CD4-positive, alpha-beta memory T cell (primary cell): ENCODE measurements at regions of chr7 and their contacts with region 1.

Region 1: DNA sequence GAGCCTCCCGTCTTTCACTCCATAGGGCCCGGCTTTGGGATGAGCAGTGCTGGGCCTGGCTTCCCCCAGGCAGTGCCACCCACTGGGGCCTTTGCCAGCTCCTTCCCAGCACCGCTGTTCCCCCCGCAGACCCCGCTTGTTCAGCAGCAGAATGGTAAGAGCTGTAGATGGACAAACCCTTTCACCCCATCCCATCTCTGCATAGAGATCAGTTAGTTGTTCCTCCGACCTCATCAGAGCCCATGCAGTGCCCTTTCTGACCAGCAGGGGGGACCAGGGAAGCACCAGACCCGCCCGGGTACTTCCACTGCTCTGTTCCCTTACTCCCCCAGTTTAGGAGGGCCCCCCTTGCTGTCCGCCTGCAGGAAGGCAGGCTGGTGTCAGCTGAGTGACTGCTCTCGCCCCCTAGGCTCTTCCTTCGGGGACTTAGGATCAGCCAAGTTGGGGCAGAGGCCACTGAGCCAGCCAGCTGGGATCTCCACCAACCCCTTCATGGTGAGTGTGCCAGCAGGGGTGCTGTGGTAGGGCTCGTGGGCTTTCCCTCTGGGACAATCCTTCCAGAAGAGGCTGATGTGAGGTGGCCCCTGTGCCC is 9.8 kb downstream of the SAP25 start:
- DNase-seq: peak; percentile 74 to 80 (median 77)
- H3K4me3 ChIP-seq: no peak overlapping the region
- H3K4me3 Mint-ChIP-seq: no peak overlapping the region
- H3K27ac ChIP-seq: peak overlapping the region; percentile 32
- H3K27ac Mint-ChIP-seq: peak overlapping the region; percentile 39 to 84 (median 59)
- H3K4me1 ChIP-seq: peaks cover 29% of the 10 kb centered on the region
- H3K4me1 Mint-ChIP-seq: peaks cover 16 to 40% (median 29%) of the 10 kb centered on the region in 4 donors
- H3K27me3 ChIP-seq: no peaks in the 10 kb centered on the region
- H3K27me3 Mint-ChIP-seq: no peaks in the 10 kb centered on the region

Region 2: GRCh38 chr7:100469227-100470044 is 94.5 kb before region 1 on chr7:
- CTCF ChIA-PET with region 1: interaction called, 70 read pairs
- POLR2A ChIA-PET with region 1: interaction called, 18 read pairs
- intact Hi-C with region 1: loop called (anchors 1 kb)
- DNase-seq: peak; percentile 71 to 78 (median 72)
- H3K4me3 ChIP-seq: no peak overlapping the region
- H3K4me3 Mint-ChIP-seq: no peak overlapping the region
- H3K27ac ChIP-seq: no peak overlapping the region
- H3K27ac Mint-ChIP-seq: peak overlapping the region; percentile 57 to 87 (median 70)
- H3K4me1 ChIP-seq: peaks cover 26% of the 10 kb centered on the region
- H3K4me1 Mint-ChIP-seq: peaks cover 17 to 37% (median 27%) of the 10 kb centered on the region in 4 donors
- H3K27me3 ChIP-seq: no peaks in the 10 kb centered on the region
- H3K27me3 Mint-ChIP-seq: no peaks in the 10 kb centered on the region

Region 3: DNA sequence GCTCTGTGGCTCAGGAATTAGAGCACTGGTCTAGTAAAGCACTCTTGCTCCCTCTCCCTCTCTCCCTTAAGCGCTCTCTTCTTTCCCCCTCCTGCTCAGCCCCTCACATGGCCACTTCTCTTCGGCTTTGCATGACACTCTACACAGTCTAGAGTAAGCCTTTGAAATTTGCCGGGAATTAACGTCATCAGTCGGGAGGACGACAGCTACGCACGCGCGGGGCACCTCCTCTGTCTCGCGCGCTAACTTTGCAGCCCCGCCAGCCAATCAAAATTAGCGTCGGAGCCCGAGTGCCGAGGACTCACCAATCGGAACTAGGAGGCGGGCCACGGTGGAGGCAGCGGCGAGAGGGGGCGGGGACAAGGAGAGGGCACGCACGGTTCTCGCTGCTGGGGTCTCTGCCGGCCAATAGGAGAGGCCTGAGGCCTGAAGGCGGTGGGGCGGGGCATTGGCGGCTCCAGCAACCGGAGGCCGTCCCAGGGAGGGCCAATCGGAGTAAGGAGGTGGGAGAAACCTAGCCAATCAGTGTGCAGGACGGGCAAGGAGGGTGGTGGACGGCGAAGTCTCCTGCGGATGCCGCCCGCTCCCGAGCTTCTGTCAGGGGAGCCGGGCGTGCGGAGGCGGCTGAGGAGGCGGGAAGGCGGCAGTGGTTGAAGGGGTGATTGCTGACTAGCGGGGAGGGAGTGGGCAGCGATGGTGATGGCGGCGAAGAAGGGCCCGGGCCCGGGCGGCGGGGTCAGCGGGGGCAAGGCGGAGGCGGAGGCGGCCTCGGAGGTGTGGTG is 25.1 kb before region 1 on chr7 and contains the start of gene AGFG2:
- CTCF ChIA-PET with region 1: interaction called, 254 read pairs
- POLR2A ChIA-PET with region 1: interaction called, 51 read pairs
- intact Hi-C with region 1: loop called (anchors 1 kb)
- DNase-seq: peak; percentile 100
- H3K4me3 ChIP-seq: peak within 1 kb of the TSS; percentile 33 to 79
- H3K4me3 Mint-ChIP-seq: peak within 1 kb of the TSS; percentile 88 to 99 (median 97)
- H3K27ac ChIP-seq: peak within 1 kb of the TSS; percentile 49
- H3K27ac Mint-ChIP-seq: peak within 1 kb of the TSS; percentile 84 to 95 (median 91)
- H3K4me1 ChIP-seq: peaks cover 42% of the 10 kb centered on the region
- H3K4me1 Mint-ChIP-seq: peaks cover 33 to 49% (median 41%) of the 10 kb centered on the region in 4 donors
- H3K27me3 ChIP-seq: no peaks in the 10 kb centered on the region
- H3K27me3 Mint-ChIP-seq: no peaks in the 10 kb centered on the region
- total RNA-seq, gene AGFG2: 56.6 to 58.3 TPM

Region 4: DNA sequence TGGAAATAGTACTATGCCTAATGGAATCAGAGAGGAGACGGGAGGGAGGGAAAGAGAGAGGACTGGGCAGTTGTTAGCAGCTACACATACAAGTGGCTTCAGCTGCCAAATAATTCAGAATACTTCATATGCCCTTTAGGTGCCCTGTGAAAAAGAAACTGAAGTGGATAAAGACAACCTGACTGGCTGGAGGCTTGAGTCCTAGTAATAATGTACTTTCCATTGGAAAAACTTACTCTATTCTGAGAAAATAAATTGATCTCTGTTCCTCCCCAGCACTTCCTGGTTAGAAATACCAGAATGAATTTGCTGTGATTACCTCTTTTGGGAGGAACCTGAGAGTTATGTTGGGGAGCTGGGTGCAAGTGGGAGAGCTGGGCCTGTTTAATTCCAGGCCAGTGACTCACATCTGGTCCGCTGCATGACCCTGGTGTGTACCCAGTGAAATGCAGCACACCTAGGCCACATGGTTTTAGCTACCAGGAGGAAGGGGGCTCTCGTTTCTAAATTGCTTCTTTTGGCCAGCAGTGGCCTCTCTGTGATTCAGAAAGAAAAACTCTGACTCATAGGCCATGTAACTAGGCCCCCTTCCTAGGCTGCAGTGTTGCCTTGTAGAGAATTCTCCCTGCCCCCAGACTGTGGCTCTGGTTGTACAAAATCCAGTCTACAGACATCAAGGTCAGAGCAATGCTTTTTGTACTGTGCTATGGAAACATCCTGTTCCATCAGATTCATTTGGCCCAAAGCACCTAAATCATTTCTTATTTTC is 18.4 kb before region 1 on chr7:
- CTCF ChIA-PET with region 1: interaction called, 254 read pairs
- POLR2A ChIA-PET with region 1: interaction called, 51 read pairs
- intact Hi-C with region 1: no loop called
- DNase-seq: peak in 1 of 5 donors; percentile 84
- H3K4me3 ChIP-seq: peak overlapping the region; percentile 25 to 29
- H3K4me3 Mint-ChIP-seq: peak overlapping the region; percentile 69 to 97 (median 88)
- H3K27ac ChIP-seq: peak overlapping the region; percentile 66
- H3K27ac Mint-ChIP-seq: peak overlapping the region; percentile 61 to 98 (median 91)
- H3K4me1 ChIP-seq: peaks cover 99% of the 10 kb centered on the region
- H3K4me1 Mint-ChIP-seq: peaks cover 76 to 100% (median 89%) of the 10 kb centered on the region in 4 donors
- H3K27me3 ChIP-seq: no peaks in the 10 kb centered on the region
- H3K27me3 Mint-ChIP-seq: no peaks in the 10 kb centered on the region

Region 5: GRCh38 chr7:100575746-100576383 is 12.0 kb after region 1 on chr7:
- CTCF ChIA-PET with region 1: interaction called, 266 read pairs
- POLR2A ChIA-PET with region 1: interaction called, 307 read pairs
- intact Hi-C with region 1: no loop called
- DNase-seq: no peak
- H3K4me3 ChIP-seq: no peak overlapping the region
- H3K4me3 Mint-ChIP-seq: no peak overlapping the region
- H3K27ac ChIP-seq: no peak overlapping the region
- H3K27ac Mint-ChIP-seq: peak overlapping the region in 1 of 7 donors; percentile 13
- H3K4me1 ChIP-seq: peaks cover 10% of the 10 kb centered on the region
- H3K4me1 Mint-ChIP-seq: peaks cover 4 to 28% (median 6%) of the 10 kb centered on the region in 4 donors
- H3K27me3 ChIP-seq: no peaks in the 10 kb centered on the region
- H3K27me3 Mint-ChIP-seq: no peaks in the 10 kb centered on the region

Region 6: DNA sequence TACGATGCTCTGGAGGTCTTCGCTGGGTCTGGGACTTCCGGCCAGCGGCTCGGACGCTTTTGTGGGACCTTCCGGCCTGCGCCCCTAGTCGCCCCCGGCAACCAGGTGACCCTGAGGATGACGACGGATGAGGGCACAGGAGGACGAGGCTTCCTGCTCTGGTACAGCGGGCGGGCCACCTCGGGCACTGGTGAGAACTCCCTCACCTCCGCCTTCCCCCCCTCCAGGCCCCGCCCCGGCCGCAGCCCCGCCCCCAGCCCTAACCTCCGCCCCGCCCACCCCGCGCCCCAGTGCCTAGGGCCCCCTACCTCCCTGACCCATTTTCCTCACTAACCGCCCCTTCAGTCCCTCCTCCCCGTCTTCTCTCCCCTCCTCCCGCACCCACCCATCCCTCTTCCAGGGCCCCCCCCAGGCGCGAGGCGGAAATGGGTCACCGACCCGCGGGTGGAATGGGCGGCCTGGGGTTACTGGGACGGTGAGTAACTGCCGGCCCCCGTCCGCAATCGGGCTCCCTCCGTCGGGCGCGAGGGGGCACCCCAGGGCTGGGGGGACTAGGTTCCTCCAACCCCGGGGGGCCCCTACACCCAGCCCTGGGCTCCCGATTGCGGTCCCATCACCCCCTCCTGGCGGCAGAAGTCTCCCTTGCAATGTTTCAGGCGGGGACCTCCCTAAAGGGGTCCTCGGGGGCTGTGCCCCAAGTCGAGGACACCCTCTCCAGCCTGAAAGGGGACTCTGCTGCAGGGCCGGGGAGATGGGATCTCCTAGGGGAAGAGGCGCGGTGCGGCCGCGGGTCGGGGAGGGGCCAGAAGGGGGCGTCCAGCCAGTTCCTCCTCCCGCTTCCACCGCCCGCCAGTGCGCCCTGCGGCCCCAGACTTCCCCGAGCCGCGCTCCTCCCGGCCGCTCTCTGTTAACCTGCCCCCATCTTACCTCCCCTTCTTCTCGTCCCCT is 40.4 kb after region 1 on chr7:
- CTCF ChIA-PET with region 1: interaction called, 5 read pairs
- POLR2A ChIA-PET with region 1: interaction called, 3 read pairs
- intact Hi-C with region 1: loop called (anchors 1 kb)
- DNase-seq: peak; percentile 63 to 83 (median 68)
- H3K4me3 ChIP-seq: peak overlapping the region; percentile 34 to 58
- H3K4me3 Mint-ChIP-seq: peak overlapping the region; percentile 78 to 93 (median 87)
- H3K27ac ChIP-seq: peak overlapping the region; percentile 64
- H3K27ac Mint-ChIP-seq: peak overlapping the region; percentile 71 to 95 (median 91)
- H3K4me1 ChIP-seq: peaks cover 21% of the 10 kb centered on the region
- H3K4me1 Mint-ChIP-seq: peaks cover 9 to 35% (median 16%) of the 10 kb centered on the region in 4 donors
- H3K27me3 ChIP-seq: no peaks in the 10 kb centered on the region
- H3K27me3 Mint-ChIP-seq: no peaks in the 10 kb centered on the region

Region 7: DNA sequence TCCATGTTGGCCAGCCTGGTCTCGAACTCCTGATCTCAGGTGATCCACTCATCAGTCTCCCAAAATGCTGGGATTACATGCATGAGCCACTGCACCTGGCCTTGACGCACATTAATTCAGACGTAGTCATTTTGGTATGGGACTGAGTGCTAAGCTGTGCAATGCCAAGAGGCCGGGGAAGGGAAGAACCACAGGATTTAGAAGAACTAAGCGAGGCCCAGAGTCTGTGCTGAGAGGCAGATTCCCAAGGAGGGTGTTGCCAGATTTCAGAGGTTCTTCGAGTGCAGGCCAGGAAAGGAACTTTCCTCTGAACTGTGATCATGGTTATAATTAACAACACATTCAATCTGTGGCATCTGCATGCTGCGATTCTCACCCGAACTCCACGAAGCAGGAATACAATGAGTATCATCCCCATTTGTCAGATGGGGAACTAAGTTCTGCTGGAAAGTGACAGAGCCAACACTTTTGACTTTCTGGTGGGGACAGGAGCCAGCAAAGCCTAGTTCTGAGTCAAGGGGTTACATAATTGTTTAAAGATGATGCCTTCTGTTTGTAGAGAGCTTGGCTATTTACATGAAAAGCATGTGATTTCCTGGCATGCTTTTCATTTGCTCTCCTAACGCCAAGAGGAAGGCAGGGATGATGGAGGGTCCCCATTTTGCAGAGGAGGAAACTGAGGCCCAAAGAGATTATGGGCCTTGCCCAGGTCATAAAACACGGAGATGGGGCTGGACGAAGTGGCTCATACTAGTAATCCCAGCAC is 163.3 kb after region 1 on chr7:
- CTCF ChIA-PET with region 1: interaction called, 47 read pairs
- POLR2A ChIA-PET with region 1: interaction called, 3 read pairs
- intact Hi-C with region 1: loop called (anchors 1 kb)
- DNase-seq: no peak
- H3K4me3 ChIP-seq: no peak overlapping the region
- H3K4me3 Mint-ChIP-seq: no peak overlapping the region
- H3K27ac ChIP-seq: no peak overlapping the region
- H3K27ac Mint-ChIP-seq: no peak overlapping the region
- H3K4me1 ChIP-seq: peaks cover 5% of the 10 kb centered on the region
- H3K4me1 Mint-ChIP-seq: peaks cover 0 to 4% (median 3%) of the 10 kb centered on the region in 4 donors
- H3K27me3 ChIP-seq: no peaks in the 10 kb centered on the region
- H3K27me3 Mint-ChIP-seq: peaks cover 12 to 22% of the 10 kb centered on the region in 2 donors